Heart right ventricle (tissue), 16 donors: ENCODE measurements at regions of chr2 and their contacts with region 1.

Region 1: DNA sequence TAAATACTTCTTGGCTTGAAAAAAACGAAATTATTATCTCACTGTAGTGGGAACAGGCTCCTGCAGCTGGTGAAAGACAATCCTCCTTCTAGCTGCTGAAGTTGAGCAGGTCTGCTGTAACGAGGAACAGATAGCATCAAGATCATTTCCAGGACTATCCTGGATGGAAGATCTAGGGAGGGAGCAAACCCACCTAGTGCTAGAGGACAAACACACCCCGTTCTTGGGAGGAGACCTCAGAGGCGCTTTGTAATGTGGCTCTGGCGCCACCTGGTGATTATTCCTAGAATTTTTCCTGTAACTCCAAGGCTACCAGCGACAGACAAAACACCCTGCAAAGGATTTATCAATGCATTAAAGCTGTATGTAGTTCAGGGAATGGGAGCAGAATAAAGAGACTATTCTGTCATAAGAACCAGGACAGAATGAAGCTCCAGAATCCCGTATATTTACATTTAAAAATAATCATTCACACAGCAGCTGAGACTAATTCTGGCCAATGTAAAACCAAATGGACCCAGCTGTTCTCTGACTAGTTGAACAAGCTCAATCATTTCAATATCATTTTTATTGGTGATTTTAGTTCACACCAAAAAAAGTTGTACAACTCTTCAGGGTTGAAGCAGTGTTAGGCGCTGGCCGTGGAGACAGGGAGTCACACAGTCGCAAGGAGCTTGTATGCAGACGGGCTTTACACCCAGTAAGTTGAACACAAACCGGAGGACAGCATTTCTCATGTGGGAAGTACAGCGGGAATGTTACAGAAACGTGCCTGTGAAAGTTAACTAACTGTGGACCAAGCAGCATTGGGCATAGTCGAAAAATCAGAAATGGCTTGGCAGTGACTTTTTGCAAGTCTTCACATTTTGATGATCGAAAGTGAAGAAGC is 290.3 kb downstream of the TRIB2 start:
- DNase-seq: peak; percentile 25 to 79
- ATAC-seq: peak; percentile 91 to 95 (median 92)
- H3K4me3 ChIP-seq: peak overlapping the region in 7 of 10 donors; percentile 4 to 39 (median 34)
- H3K27ac ChIP-seq: peak overlapping the region in 9 of 10 donors; percentile 11 to 66 (median 42)
- H3K4me1 ChIP-seq: peaks cover 2 to 38% (median 21%) of the 10 kb centered on the region in 9 donors
- H3K27me3 ChIP-seq: no peaks in the 10 kb centered on the region
- CTCF ChIP-seq: peak; percentile 77 to 95 (median 90)

Region 2: DNA sequence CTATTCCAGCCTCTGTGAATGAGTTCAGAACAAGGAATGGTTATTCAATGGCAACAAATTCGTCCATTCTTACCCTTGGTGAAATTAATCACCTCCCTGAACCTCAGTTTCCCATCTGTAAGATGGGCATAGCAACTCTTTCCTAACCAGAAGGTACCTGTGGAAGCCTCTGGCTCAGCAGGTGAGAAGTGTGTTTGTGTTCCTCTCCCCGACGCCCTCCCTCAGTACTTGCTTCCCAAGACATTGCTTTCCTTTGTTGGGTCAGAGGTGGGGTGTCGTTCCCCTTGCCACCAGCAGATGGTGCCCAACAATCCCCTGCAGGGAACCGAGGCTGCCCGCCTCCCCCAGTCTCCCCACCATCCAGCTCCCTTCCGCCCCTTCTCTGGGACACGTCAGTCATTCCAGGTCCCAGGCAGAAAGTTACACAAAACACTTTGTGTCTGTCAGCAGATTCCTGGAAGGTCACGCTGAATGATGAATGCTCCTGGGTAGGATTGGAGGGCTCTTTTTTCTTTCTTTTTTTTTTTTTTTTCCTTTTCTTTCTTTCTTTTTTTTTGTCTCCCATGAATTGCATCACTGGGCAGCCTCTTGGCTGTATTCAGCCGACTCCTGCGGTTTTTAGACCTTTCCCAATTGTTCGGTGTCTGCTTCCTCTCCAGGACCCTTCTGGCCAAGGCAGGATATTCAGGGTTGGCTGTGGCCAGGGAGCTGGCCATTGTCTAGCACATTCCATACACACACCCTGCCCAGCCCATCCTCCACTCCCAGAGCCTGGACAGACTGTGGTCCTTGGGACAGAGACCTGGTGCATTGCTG is 1143.4 kb before region 1 on chr2:
- intact Hi-C with region 1: loop called in 7 of 10 experiments (anchors 1 to 10 kb)
- DNase-seq: peak; percentile 84 to 89
- ATAC-seq: peak; percentile 91 to 96 (median 94)
- H3K4me3 ChIP-seq: peak overlapping the region in 5 of 10 donors; percentile 11 to 31 (median 16)
- H3K27ac ChIP-seq: peak overlapping the region in 9 of 10 donors; percentile 45 to 77 (median 49)
- H3K4me1 ChIP-seq: peaks cover 0 to 23% (median 13%) of the 10 kb centered on the region in 9 donors
- H3K27me3 ChIP-seq: no peaks in the 10 kb centered on the region
- CTCF ChIP-seq: peak; percentile 91 to 99 (median 97)

Region 3: GRCh38 chr2:12169721-12170120 is 837.4 kb before region 1 on chr2:
- intact Hi-C with region 1: loop called in 1 of 10 experiments (anchors 10 kb)
- DNase-seq: peak; percentile 18 to 77
- ATAC-seq: peak; percentile 68 to 94 (median 80)
- H3K4me3 ChIP-seq: no peak overlapping the region
- H3K27ac ChIP-seq: peak overlapping the region in 8 of 10 donors; percentile 34 to 85 (median 62)
- H3K4me1 ChIP-seq: peaks cover 18 to 33% (median 27%) of the 10 kb centered on the region in 9 donors
- H3K27me3 ChIP-seq: no peaks in the 10 kb centered on the region
- CTCF ChIP-seq: no peak

Region 4: GRCh38 chr2:12543978-12544558 is 463.0 kb before region 1 on chr2:
- intact Hi-C with region 1: loop called in 1 of 10 experiments (anchors 10 kb)
- DNase-seq: no peak
- ATAC-seq: peak in 3 of 8 donors; percentile 8 to 52 (median 17)
- H3K4me3 ChIP-seq: no peak overlapping the region
- H3K27ac ChIP-seq: peak overlapping the region in 3 of 10 donors; percentile 29 to 56 (median 38)
- H3K4me1 ChIP-seq: peaks cover 3 to 19% (median 9%) of the 10 kb centered on the region in 9 donors
- H3K27me3 ChIP-seq: no peaks in the 10 kb centered on the region
- CTCF ChIP-seq: no peak

Region 5: DNA sequence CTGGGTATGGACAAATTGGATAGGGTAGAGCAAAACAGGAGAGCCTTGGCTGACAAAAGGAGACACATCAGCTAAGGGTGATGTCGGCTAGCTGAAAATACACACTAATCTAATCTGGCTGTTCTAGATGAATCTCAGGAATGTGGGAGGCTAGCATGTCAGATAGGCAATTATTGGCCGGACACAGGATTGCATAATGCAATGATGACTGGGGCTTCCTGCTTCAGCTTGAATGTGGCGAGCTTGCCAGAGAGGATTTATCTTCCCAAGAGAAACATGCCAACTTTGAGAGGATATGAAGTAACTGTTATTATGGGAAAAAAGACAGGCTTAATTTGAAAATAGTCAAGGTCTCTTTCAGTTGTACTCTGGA is 188.0 kb before region 1 on chr2:
- intact Hi-C with region 1: loop called in 2 of 10 experiments (anchors 10 kb)
- DNase-seq: peak in 1 of 2 donors; percentile 93
- ATAC-seq: peak; percentile 95 to 97 (median 96)
- H3K4me3 ChIP-seq: peak overlapping the region in 1 of 10 donors; percentile 11
- H3K27ac ChIP-seq: peak overlapping the region; percentile 70 to 92 (median 87)
- H3K4me1 ChIP-seq: peaks cover 16 to 70% (median 44%) of the 10 kb centered on the region in 9 donors
- H3K27me3 ChIP-seq: no peaks in the 10 kb centered on the region
- CTCF ChIP-seq: no peak